ENCODE measurements at regions of chr6 and their contacts with region 1.

Region 1: DNA sequence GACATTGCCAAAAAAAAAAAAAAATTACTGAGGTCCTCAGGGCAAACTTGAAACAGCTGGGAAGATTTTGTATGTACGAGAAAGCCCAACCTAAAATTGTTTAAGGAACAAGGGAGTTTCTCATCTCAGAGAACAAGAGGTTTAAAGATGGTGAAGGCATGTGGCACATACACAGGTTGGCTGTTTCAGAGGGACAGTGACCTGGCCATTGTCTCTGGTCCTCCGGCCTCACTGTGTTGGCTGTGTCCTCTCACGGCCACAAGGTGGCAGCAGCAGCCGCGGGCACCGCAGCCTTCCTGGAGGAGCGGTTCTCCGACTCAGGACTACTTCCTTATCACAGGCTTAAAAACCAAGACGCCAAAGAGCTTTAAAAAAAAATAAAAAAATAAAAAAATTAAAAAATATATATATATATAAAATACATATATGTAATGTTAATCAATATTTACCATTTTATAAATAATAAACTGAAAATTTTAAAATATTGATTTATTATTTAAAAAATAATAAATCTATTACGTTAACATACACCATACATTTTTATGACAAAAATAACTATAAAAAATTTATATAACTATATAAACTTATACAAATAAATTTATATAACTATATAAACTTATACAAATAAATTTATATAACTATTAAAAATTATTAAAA is 52.8 kb downstream of the GTF2H5 start:
- DNase-seq: peak; percentile 63
- H3K4me3 Mint-ChIP-seq: no peak overlapping the region
- H3K27ac Mint-ChIP-seq: no peak overlapping the region
- H3K4me1 Mint-ChIP-seq: peaks cover 4% of the 10 kb centered on the region
- H3K27me3 Mint-ChIP-seq: no peaks in the 10 kb centered on the region

Region 2: GRCh38 chr6:158387036-158387435 is 166.1 kb after region 1 on chr6:
- intact Hi-C with region 1: loop called (anchors 1 kb)
- DNase-seq: no peak
- H3K4me3 Mint-ChIP-seq: no peak overlapping the region
- H3K27ac Mint-ChIP-seq: no peak overlapping the region
- H3K4me1 Mint-ChIP-seq: no peaks in the 10 kb centered on the region
- H3K27me3 Mint-ChIP-seq: peaks cover 2% of the 10 kb centered on the region

Region 3: GRCh38 chr6:158518191-158519127 is 297.5 kb after region 1 on chr6:
- intact Hi-C with region 1: loop called (anchors 1 kb)
- DNase-seq: peak; percentile 60
- H3K4me3 Mint-ChIP-seq: peak overlapping the region; percentile 86
- H3K27ac Mint-ChIP-seq: peak overlapping the region; percentile 87
- H3K4me1 Mint-ChIP-seq: peaks cover 34% of the 10 kb centered on the region
- H3K27me3 Mint-ChIP-seq: peaks cover 20% of the 10 kb centered on the region

Region 4: GRCh38 chr6:158559895-158560835 is 339.3 kb after region 1 on chr6 and contains the start of gene TMEM181:
- intact Hi-C with region 1: loop called (anchors 2 kb)
- DNase-seq: peak; percentile 84
- H3K4me3 Mint-ChIP-seq: peak within 1 kb of the TSS; percentile 97
- H3K27ac Mint-ChIP-seq: peak within 1 kb of the TSS; percentile 95
- H3K4me1 Mint-ChIP-seq: peaks cover 32% of the 10 kb centered on the region
- H3K27me3 Mint-ChIP-seq: peaks cover 3% of the 10 kb centered on the region
- total RNA-seq, gene TMEM181: 17.0 and 17.7 TPM in 2 replicates

Region 5: GRCh38 chr6:158605266-158605878 is 384.5 kb after region 1 on chr6:
- intact Hi-C with region 1: loop called (anchors 1 kb)
- DNase-seq: peak; percentile 22
- H3K4me3 Mint-ChIP-seq: no peak overlapping the region
- H3K27ac Mint-ChIP-seq: no peak overlapping the region
- H3K4me1 Mint-ChIP-seq: peaks cover 10% of the 10 kb centered on the region
- H3K27me3 Mint-ChIP-seq: no peaks in the 10 kb centered on the region

Region 6: GRCh38 chr6:158686791-158687381 is 466.0 kb after region 1 on chr6:
- intact Hi-C with region 1: loop called (anchors 2 kb)
- DNase-seq: peak; percentile 61
- H3K4me3 Mint-ChIP-seq: peak overlapping the region; percentile 74
- H3K27ac Mint-ChIP-seq: peak overlapping the region; percentile 90
- H3K4me1 Mint-ChIP-seq: peaks cover 62% of the 10 kb centered on the region
- H3K27me3 Mint-ChIP-seq: no peaks in the 10 kb centered on the region